GM12878 (cell line): ENCODE measurements at regions of chr2 and their contacts with region 1.

Region 1: DNA sequence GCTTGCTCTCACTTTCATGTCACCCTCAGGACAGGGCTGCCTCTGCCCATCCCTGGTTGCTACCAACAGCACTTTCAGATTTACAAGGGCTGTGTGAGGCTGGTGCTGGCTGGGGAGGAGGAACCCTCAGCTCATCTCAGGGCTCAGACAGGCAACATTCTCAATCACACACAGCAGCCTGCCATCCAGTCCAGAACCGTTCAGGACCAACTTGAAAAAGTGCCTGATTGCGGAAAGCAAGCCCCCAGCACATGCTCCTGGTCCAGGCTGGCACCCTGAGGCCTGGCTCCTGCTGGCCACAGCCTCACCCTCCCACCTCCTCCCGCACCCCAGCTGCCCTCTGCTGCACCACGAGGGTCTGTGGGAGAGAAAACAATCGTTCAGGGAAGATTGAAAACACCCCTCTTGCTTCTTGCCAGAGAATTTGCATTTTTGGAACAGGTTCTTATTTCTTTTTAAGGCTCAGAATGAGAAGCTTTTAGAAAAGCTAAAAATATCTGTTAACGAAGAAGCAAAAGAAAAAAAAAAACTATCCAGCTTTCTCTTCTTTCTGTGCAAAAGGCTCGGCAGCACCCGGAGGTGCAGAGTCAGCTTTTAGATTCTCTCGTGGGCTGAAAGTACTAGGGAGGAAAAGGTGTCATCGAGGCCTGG is 403.8 kb upstream of the ID2 start:
- DNase-seq: peak; percentile 56
- ATAC-seq: peak; percentile 95
- H3K4me3 ChIP-seq: peak overlapping the region; percentile 40; the same call in 1 of the 2 replicates
- H3K27ac ChIP-seq: peak overlapping the region; percentile 56
- H3K4me1 ChIP-seq: peaks cover 17% of the 10 kb centered on the region
- H3K27me3 ChIP-seq: no peaks in the 10 kb centered on the region
- CTCF ChIP-seq: no peak
- EP300 ChIP-seq: peak in 1 of 2 experiments; percentile 58; a peak in 1 of 4 replicates
- POLR2A ChIP-seq: no peak
- RAD21 ChIP-seq: no peak

Region 2: DNA sequence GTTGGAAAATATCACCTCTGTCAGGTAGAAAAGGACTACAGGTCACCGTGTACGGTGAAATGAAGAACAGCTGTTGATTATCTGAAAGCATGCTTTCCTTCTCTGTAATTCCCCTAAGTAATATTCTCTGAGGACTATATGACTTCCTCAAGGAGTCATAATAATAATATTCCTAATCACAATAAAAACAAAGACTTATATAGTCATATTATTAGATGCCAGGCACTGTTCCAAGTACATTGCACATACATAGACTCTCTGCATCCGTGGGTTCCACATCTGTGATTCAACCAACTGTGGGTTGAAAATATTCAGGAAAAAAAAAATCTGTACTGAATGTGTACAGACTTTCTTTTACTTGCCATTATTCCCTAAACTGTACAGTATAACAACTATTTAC is 108.6 kb before region 1 on chr2:
- CTCF ChIA-PET with region 1: no interaction called
- POLR2A ChIA-PET with region 1: no interaction called
- RAD21 ChIA-PET with region 1: no interaction called
- SMC1A ChIA-PET with region 1: interaction called, 11 read pairs
- in situ Hi-C with region 1: no loop called
- intact Hi-C with region 1: no loop called
- DNase-seq: no peak
- ATAC-seq: no peak
- H3K4me3 ChIP-seq: no peak overlapping the region
- H3K27ac ChIP-seq: no peak overlapping the region
- H3K4me1 ChIP-seq: no peaks in the 10 kb centered on the region
- H3K27me3 ChIP-seq: no peaks in the 10 kb centered on the region
- CTCF ChIP-seq: no peak
- EP300 ChIP-seq: no peak
- POLR2A ChIP-seq: no peak
- RAD21 ChIP-seq: no peak

Region 3: DNA sequence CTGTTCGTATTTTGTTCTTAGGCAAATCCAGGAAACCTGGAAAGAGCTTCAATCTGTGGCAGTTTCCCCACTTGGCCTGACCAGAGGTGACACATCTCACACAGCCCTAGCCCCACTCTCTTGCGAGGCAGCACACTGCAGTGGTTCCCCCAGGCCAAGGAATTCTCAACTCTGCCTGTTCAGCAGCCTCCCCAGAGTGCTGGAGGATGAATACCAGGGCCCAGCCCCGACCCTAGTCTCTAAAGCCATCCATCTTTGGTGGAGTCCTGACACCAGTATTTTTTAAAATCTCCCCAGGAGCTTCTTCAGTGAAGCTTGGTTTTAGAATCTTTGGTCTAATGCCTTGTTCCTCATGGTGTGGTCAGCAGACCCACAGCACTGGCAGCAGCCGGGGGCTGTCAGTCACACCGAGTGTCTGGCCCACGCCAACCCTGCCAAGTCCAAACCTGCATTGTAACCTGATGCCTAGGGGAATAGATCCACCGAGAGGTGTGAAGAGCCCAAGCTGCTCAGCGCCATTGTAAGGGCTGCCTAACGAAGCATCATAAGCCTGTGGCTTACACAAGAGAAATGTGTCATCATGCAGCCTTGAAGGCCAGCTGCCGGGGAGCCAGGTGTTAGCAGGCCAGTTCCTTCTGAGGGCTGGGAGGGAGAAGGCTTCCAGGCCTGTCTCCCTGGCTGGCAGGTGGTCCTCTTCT is 24.9 kb before region 1 on chr2:
- CTCF ChIA-PET with region 1: interaction called, 3 read pairs
- POLR2A ChIA-PET with region 1: interaction called, 4 read pairs
- RAD21 ChIA-PET with region 1: interaction called, 12 read pairs
- SMC1A ChIA-PET with region 1: interaction called, 11 read pairs
- in situ Hi-C with region 1: no loop called
- intact Hi-C with region 1: no loop called
- DNase-seq: peak; percentile 48
- ATAC-seq: peak; percentile 98
- H3K4me3 ChIP-seq: no peak overlapping the region
- H3K27ac ChIP-seq: no peak overlapping the region
- H3K4me1 ChIP-seq: peaks cover 20% of the 10 kb centered on the region
- H3K27me3 ChIP-seq: no peaks in the 10 kb centered on the region
- CTCF ChIP-seq: no peak
- EP300 ChIP-seq: peak; percentile 38 to 47; a peak in 1 of 4 replicates
- POLR2A ChIP-seq: no peak
- RAD21 ChIP-seq: no peak

Region 4: GRCh38 chr2:8849327-8849726 is 571.3 kb after region 1 on chr2:
- CTCF ChIA-PET with region 1: no interaction called
- POLR2A ChIA-PET with region 1: no interaction called
- RAD21 ChIA-PET with region 1: no interaction called
- SMC1A ChIA-PET with region 1: no interaction called
- in situ Hi-C with region 1: no loop called
- intact Hi-C with region 1: no loop called
- DNase-seq: no peak
- ATAC-seq: no peak
- H3K4me3 ChIP-seq: no peak overlapping the region
- H3K27ac ChIP-seq: no peak overlapping the region
- H3K4me1 ChIP-seq: no peaks in the 10 kb centered on the region
- H3K27me3 ChIP-seq: no peaks in the 10 kb centered on the region
- CTCF ChIP-seq: no peak
- EP300 ChIP-seq: no peak
- POLR2A ChIP-seq: no peak
- RAD21 ChIP-seq: no peak